ENCODE measurements at regions of chr15 and their contacts with region 1.

Region 1: GRCh38 chr15:40857601-40858341 is 13.9 kb downstream of the SPINT1 start:
- DNase-seq: peak; percentile 51 to 86 (median 73)
- ATAC-seq: peak; percentile 92 to 94 (median 92)
- H3K4me3 ChIP-seq: no peak overlapping the region
- H3K4me3 Mint-ChIP-seq: no peak overlapping the region
- H3K27ac ChIP-seq: no peak overlapping the region
- H3K27ac Mint-ChIP-seq: no peak overlapping the region
- H3K4me1 ChIP-seq: peaks cover 0 to 15% of the 10 kb centered on the region in 2 experiments
- H3K4me1 Mint-ChIP-seq: peaks cover 10 to 18% (median 16%) of the 10 kb centered on the region in 3 donors
- H3K27me3 ChIP-seq: peaks cover 0 to 25% of the 10 kb centered on the region in 2 experiments
- H3K27me3 Mint-ChIP-seq: peaks cover 0 to under 1% of the 10 kb centered on the region in 2 donors

Region 2: GRCh38 chr15:40534371-40534770 is 323.4 kb before region 1 on chr15:
- CTCF ChIA-PET with region 1: interaction called in 1 of 2 experiments, 18 read pairs
- POLR2A ChIA-PET with region 1: no interaction called
- DNase-seq: no peak
- ATAC-seq: no peak
- H3K4me3 ChIP-seq: no peak overlapping the region
- H3K4me3 Mint-ChIP-seq: no peak overlapping the region
- H3K27ac ChIP-seq: no peak overlapping the region
- H3K27ac Mint-ChIP-seq: no peak overlapping the region
- H3K4me1 ChIP-seq: no peaks in the 10 kb centered on the region
- H3K4me1 Mint-ChIP-seq: no peaks in the 10 kb centered on the region
- H3K27me3 ChIP-seq: no peaks in the 10 kb centered on the region
- H3K27me3 Mint-ChIP-seq: no peaks in the 10 kb centered on the region

Region 3: DNA sequence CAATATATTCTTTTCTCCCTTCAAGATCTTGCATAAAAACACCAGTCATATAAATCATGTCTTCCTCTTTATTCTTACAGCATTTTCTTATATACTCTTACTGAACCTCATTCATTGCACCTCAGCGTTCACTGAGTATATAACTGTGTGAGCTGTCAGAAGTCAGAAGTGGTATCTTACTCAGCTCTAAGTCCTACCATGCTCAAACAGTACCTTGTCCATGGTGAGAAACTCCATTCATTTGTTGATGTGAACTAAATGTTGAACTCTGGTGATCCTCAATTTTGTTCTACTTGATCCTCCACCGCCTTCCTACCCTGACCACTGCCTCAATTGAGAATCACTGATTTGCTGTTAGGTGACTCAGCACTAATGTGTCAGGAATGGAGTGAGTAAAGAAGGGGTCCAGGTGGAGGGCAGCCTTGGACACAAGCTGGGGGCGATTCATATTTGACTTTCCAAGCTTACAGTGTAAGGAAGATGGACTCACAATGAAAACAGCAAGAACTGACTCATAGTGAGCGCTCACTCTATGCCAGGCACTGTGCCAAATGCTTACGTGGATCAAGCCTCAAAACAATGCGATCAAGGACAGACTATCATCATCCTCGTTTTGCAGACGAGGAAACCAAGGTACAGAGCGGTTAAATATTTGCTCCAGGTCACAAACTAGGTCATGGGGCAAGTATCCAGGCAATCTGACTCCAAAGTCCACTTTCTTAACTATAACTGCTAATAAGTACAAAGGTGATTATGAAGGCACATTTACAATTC is 64.4 kb before region 1 on chr15:
- CTCF ChIA-PET with region 1: interaction called in 1 of 2 experiments, 15 read pairs
- POLR2A ChIA-PET with region 1: no interaction called
- DNase-seq: no peak
- ATAC-seq: no peak
- H3K4me3 ChIP-seq: no peak overlapping the region
- H3K4me3 Mint-ChIP-seq: no peak overlapping the region
- H3K27ac ChIP-seq: no peak overlapping the region
- H3K27ac Mint-ChIP-seq: no peak overlapping the region
- H3K4me1 ChIP-seq: peaks cover 0 to 5% of the 10 kb centered on the region in 2 experiments
- H3K4me1 Mint-ChIP-seq: peaks cover 18 to 31% (median 25%) of the 10 kb centered on the region in 3 donors
- H3K27me3 ChIP-seq: no peaks in the 10 kb centered on the region
- H3K27me3 Mint-ChIP-seq: no peaks in the 10 kb centered on the region

Region 4: DNA sequence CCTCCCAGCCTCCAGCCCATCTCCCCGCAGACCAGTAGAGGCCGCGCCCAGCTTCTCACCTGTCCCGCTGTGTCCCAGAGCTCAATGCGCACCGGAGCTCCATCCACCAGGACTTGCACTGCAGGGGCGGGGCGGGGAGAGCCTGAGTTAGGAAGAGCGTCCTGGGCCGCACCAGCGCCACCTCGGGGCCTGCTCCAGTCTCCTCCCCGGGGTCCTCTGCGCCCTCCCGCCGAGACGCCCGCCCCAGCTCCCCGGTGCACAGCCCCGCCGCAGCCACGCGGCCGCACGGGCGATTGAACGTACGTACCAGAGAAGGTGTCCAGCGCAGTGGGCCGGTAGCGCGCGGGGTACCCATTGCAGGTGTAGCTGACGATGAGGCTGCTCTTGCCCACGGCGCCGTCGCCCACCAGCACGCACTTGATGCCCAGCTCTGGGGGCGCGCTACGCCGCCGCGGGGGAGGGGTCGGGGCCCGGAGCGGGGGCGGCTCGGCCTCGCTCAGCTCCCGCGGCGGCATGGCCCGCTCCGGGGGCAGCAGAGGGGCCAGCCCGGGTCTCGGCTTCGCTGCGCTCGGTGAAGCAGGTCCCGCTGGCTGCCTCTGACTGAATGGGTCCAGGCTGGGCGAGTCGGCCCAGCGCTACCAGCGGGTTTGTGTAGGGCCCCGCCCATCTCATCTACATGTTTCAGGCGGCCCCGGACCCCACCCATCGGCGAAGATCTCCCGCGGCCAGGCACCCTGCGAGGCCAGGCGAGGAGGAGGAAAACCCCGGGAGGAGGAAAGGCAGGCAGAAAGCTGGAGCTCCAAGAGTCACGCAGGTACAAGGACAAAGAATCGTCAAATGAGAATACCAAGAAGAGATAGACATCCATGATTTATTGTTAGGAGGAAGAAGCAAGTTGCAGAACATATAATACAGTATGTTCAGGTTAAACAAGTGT is 16.1 kb after region 1 on chr15 and contains the start of gene RHOV:
- CTCF ChIA-PET with region 1: interaction called, 8 to 9 read pairs
- POLR2A ChIA-PET with region 1: interaction called in 1 of 2 experiments, 12 read pairs
- DNase-seq: peak in 29 of 35 experiments; percentile 14 to 66 (median 38)
- ATAC-seq: peak; percentile 84 to 90 (median 88)
- H3K4me3 ChIP-seq: peak within 1 kb of the TSS; percentile 47 to 61
- H3K4me3 Mint-ChIP-seq: peak within 1 kb of the TSS; percentile 75 to 84 (median 80)
- H3K27ac ChIP-seq: no peak within 1 kb of the TSS
- H3K27ac Mint-ChIP-seq: peak within 1 kb of the TSS in 1 of 2 donors; percentile 52
- H3K4me1 ChIP-seq: peaks cover 0 to 15% of the 10 kb centered on the region in 2 experiments
- H3K4me1 Mint-ChIP-seq: peaks cover 10 to 12% (median 11%) of the 10 kb centered on the region in 3 donors
- H3K27me3 ChIP-seq: peaks cover 0 to 30% of the 10 kb centered on the region in 2 experiments
- H3K27me3 Mint-ChIP-seq: peaks cover 3 to 6% of the 10 kb centered on the region in 2 donors
- total RNA-seq, gene RHOV: not detected

Region 5: DNA sequence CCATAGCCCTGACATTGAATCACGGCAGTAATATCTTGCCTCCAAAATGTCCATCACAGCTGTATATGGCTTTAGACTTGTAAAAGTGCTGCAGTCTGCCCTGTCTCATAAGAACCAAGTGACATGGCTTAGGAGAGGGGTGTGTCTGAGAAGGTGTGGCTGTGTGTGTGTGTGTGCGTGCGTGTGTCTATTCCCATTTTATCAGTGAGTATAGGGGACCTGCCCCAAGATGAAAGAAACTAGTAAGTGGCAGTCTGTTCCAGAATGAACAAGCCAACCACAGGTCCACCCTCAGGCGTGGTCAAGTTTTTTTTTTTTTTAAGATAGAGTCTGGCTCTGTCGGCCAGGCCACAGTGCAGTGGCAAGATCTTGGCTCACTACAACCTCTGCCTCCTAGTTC is 21.8 kb after region 1 on chr15:
- CTCF ChIA-PET with region 1: interaction called, 4 to 11 read pairs
- POLR2A ChIA-PET with region 1: interaction called in 1 of 2 experiments, 12 read pairs
- DNase-seq: no peak
- ATAC-seq: no peak
- H3K4me3 ChIP-seq: no peak overlapping the region
- H3K4me3 Mint-ChIP-seq: no peak overlapping the region
- H3K27ac ChIP-seq: no peak overlapping the region
- H3K27ac Mint-ChIP-seq: no peak overlapping the region
- H3K4me1 ChIP-seq: peaks cover 0 to 7% of the 10 kb centered on the region in 2 experiments
- H3K4me1 Mint-ChIP-seq: peaks cover 5 to 9% (median 7%) of the 10 kb centered on the region in 3 donors
- H3K27me3 ChIP-seq: peaks cover 0 to 19% of the 10 kb centered on the region in 2 experiments
- H3K27me3 Mint-ChIP-seq: no peaks in the 10 kb centered on the region

Region 6: GRCh38 chr15:40893733-40894688 is 36.2 kb after region 1 on chr15 and contains the start of gene VPS18:
- CTCF ChIA-PET with region 1: interaction called, 52 to 127 read pairs
- POLR2A ChIA-PET with region 1: interaction called, 7 to 8 read pairs
- DNase-seq: peak; percentile 96 to 99 (median 98)
- ATAC-seq: peak; percentile 98 to 99 (median 98)
- H3K4me3 ChIP-seq: peak within 1 kb of the TSS; percentile 87 to 91
- H3K4me3 Mint-ChIP-seq: peak within 1 kb of the TSS; percentile 99
- H3K27ac ChIP-seq: peak within 1 kb of the TSS; percentile 76
- H3K27ac Mint-ChIP-seq: peak within 1 kb of the TSS; percentile 91 to 95
- H3K4me1 ChIP-seq: peaks cover 11 to 33% of the 10 kb centered on the region in 2 experiments
- H3K4me1 Mint-ChIP-seq: peaks cover 32 to 43% (median 33%) of the 10 kb centered on the region in 3 donors
- H3K27me3 ChIP-seq: no peaks in the 10 kb centered on the region
- H3K27me3 Mint-ChIP-seq: no peaks in the 10 kb centered on the region
- total RNA-seq, gene VPS18: 16.2 to 23.4 (median 21.3) TPM

Region 7: DNA sequence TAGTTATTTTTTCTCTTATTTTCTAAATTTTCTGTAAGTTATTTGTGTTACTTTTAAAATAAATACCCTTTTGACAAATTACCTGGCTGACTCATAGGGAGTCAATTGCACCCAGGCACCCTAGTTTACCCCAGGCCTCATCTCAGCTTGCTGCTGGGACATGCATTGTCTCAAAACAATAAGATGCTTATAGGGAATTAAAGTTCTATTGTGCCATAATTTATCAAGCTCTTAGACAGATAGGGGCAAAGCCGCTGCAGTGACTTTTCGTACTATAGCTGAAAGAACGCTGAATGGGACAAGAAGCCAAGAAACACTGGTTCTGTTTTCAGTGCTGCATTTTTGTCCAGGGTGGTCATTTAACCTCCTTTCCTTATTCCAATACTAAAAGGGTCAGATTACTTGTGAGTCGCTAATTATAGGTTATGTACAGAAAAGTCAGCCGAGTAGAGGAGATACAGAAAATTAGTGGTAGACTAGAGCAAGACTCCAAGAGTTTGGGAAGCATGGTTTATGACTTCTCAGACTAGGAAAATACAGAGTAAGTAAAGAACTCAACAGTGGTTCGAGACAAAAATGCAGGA is 322.5 kb after region 1 on chr15:
- CTCF ChIA-PET with region 1: interaction called, 5 to 12 read pairs
- POLR2A ChIA-PET with region 1: no interaction called
- DNase-seq: no peak
- ATAC-seq: no peak
- H3K4me3 ChIP-seq: no peak overlapping the region
- H3K4me3 Mint-ChIP-seq: no peak overlapping the region
- H3K27ac ChIP-seq: no peak overlapping the region
- H3K27ac Mint-ChIP-seq: no peak overlapping the region
- H3K4me1 ChIP-seq: no peaks in the 10 kb centered on the region
- H3K4me1 Mint-ChIP-seq: no peaks in the 10 kb centered on the region
- H3K27me3 ChIP-seq: no peaks in the 10 kb centered on the region
- H3K27me3 Mint-ChIP-seq: peaks cover 4 to 6% of the 10 kb centered on the region in 2 donors

Measured in T-cell (primary cell).